ENCODE measurements at regions of chr17 and their contacts with region 1.

Region 1: GRCh38 chr17:5695480-5695879 is 111.2 kb upstream of the NLRP1 start:
- DNase-seq: no peak
- H3K4me3 ChIP-seq: no peak overlapping the region
- H3K27me3 ChIP-seq: 0 out of 2 replicates have a peak, but pooled peaks cover 2% of the 10 kb centered on the region
- CTCF ChIP-seq: no peak

Region 2: DNA sequence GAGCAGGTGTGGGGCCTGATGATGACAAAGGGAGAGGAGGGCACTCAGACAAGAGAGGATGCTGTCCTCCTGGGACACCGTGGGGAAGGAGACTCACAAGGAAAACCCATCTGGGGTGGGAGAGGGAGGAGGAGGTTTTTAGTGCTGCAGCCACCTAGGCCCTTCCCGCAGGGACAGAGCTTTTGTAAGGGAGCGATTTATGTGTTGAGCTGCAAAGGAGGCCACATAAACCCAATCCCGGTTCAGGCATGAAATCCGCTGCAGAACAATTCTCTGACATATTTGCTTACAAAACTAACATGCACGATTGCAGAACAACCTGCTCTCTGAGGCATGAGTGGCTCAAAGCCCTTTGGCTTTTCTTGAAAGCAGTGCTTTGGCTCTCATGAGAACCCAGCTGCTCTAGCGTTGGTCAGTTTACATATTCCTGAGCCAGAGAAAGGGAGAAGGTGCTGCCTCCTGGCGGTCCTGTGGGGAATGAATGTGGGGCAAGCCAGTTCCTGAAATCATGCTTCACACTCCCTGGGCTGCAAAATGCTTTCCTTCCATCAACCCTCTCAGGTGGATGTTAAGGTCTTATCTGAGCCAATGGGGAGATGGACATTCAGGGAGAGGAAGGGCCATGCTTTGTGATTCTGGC is 11.2 kb after region 1 on chr17:
- CTCF ChIA-PET with region 1: interaction called, 15 read pairs
- POLR2A ChIA-PET with region 1: no interaction called
- DNase-seq: no peak
- H3K4me3 ChIP-seq: no peak overlapping the region
- H3K27me3 ChIP-seq: 0 out of 2 replicates have a peak, but pooled peaks cover 2% of the 10 kb centered on the region
- CTCF ChIP-seq: peak; percentile 90

Region 3: DNA sequence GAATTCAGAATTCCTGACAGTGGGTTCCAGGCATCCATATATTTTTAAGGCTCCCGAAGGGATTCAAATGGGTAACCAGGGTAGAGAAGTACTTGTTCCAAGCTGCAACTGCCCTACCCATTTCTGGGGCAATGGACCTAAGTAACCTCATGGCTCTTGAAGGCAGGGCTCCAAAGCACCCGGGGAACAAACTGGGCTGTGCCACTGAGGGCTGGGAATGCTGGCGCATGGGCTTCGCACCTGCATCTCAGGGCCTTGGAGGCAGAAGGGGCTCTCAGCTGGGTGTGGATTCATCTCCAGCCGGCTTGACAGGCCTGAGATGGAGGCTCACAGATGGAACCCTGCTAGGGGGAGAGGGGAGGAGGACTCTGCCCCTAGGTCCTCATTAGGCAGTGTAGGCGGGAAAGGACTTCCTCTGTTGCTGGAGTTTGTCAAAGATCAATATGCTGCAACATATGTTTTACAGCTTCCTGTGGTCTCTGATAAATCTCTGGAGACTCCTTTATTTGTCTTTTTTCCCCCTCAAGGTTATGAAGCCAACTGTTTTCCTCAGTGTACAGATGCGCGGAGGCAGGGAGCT is 121.1 kb after region 1 on chr17:
- CTCF ChIA-PET with region 1: no interaction called
- POLR2A ChIA-PET with region 1: no interaction called
- DNase-seq: no peak
- H3K4me3 ChIP-seq: no peak overlapping the region
- H3K27me3 ChIP-seq: no peaks in the 10 kb centered on the region; the same call in 1 of the 2 replicates
- CTCF ChIP-seq: no peak

Region 4: GRCh38 chr17:5877948-5878347 is 182.5 kb after region 1 on chr17:
- CTCF ChIA-PET with region 1: no interaction called
- POLR2A ChIA-PET with region 1: no interaction called
- DNase-seq: no peak
- H3K4me3 ChIP-seq: no peak overlapping the region
- H3K27me3 ChIP-seq: no peaks in the 10 kb centered on the region; the same call in 1 of the 2 replicates
- CTCF ChIP-seq: no peak